GM12878 (cell line): ENCODE measurements at regions of chr13 and their contacts with region 1.

Region 1: GRCh38 chr13:22073718-22074117 is 402.8 kb downstream of the FGF9 start:
- DNase-seq: peak; percentile 33
- ATAC-seq: peak; percentile 91
- H3K4me3 ChIP-seq: no peak overlapping the region
- H3K27ac ChIP-seq: no peak overlapping the region
- H3K4me1 ChIP-seq: peaks cover 11% of the 10 kb centered on the region; the same call in 1 of the 2 replicates
- H3K27me3 ChIP-seq: no peaks in the 10 kb centered on the region
- CTCF ChIP-seq: no peak
- EP300 ChIP-seq: peak; percentile 70; a peak in 2 of 4 replicates
- POLR2A ChIP-seq: no peak
- RAD21 ChIP-seq: no peak

Region 2: DNA sequence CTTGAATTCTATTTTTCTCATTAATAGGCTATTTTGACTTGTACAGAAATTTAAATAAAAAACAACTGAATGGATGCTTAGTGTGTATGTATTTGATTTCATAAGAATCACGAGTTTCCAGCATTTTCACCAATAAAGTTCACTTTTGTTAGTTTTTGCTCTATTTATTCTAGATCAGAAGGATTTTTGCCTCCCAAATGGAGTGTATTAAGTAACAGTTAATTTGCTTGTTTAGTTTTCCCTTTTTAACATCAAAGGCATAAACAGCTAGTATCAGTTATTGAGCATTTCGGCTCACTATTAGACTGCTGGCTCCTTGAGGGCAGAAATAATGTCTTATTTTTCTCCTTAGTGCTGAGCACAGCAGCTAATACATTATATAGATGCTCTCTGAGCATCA is 11.3 kb after region 1 on chr13:
- CTCF ChIA-PET with region 1: interaction called, 4 read pairs
- POLR2A ChIA-PET with region 1: no interaction called
- RAD21 ChIA-PET with region 1: no interaction called
- SMC1A ChIA-PET with region 1: interaction called, 10 read pairs
- in situ Hi-C with region 1: no loop called
- intact Hi-C with region 1: no loop called
- DNase-seq: no peak
- ATAC-seq: no peak
- H3K4me3 ChIP-seq: no peak overlapping the region
- H3K27ac ChIP-seq: no peak overlapping the region
- H3K4me1 ChIP-seq: no peaks in the 10 kb centered on the region
- H3K27me3 ChIP-seq: no peaks in the 10 kb centered on the region
- CTCF ChIP-seq: no peak
- EP300 ChIP-seq: no peak
- POLR2A ChIP-seq: no peak
- RAD21 ChIP-seq: no peak

Region 3: GRCh38 chr13:22114630-22115311 is 41.1 kb after region 1 on chr13:
- CTCF ChIA-PET with region 1: interaction called, 5 read pairs
- POLR2A ChIA-PET with region 1: no interaction called
- RAD21 ChIA-PET with region 1: interaction called, 11 read pairs
- SMC1A ChIA-PET with region 1: interaction called, 9 read pairs
- in situ Hi-C with region 1: no loop called
- intact Hi-C with region 1: no loop called
- DNase-seq: peak; percentile 99
- ATAC-seq: peak; percentile 92
- H3K4me3 ChIP-seq: no peak overlapping the region
- H3K27ac ChIP-seq: peak overlapping the region; percentile 78
- H3K4me1 ChIP-seq: peaks cover 18% of the 10 kb centered on the region
- H3K27me3 ChIP-seq: no peaks in the 10 kb centered on the region
- CTCF ChIP-seq: no peak
- EP300 ChIP-seq: peak; percentile 99 to 100
- POLR2A ChIP-seq: peak; percentile 58; the same call in 1 of the 2 replicates
- RAD21 ChIP-seq: peak; percentile 17; the same call in 1 of the 2 replicates

Region 4: DNA sequence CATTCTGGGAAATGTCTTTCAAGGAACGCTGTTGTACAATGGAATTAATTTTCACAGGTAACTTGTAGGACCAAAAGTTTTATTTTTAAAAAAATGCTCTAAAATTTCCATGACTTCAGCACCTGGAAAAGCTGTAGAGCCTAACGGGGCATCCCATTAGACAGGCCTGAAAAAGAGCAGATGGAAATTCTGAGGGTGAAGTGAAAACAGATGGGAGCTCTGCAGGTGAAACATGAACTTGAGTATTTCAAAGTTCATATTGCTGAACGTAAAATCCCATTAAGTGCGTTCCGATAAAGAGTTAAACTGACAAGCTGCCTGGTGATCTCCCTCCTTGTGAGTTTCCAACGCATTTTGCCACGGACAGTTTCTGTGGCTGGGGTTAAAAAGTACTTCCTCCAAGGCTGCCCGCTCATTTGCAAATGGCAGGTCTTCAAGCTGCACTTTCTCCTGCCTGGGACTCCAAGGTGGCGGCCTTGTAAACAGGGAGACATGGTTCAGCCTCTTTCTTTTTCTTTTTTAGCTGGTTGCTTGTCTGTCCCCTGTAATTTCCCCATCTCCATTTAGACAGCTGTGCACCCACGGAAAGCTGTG is 47.5 kb after region 1 on chr13:
- CTCF ChIA-PET with region 1: interaction called, 4 read pairs
- POLR2A ChIA-PET with region 1: interaction called, 4 read pairs
- RAD21 ChIA-PET with region 1: interaction called, 5 read pairs
- SMC1A ChIA-PET with region 1: interaction called, 11 read pairs
- in situ Hi-C with region 1: no loop called
- intact Hi-C with region 1: no loop called
- DNase-seq: peak; percentile 49
- ATAC-seq: peak; percentile 79
- H3K4me3 ChIP-seq: no peak overlapping the region
- H3K27ac ChIP-seq: peak overlapping the region; percentile 33; the same call in 1 of the 2 replicates
- H3K4me1 ChIP-seq: peaks cover 24% of the 10 kb centered on the region
- H3K27me3 ChIP-seq: no peaks in the 10 kb centered on the region
- CTCF ChIP-seq: no peak
- EP300 ChIP-seq: peak in 1 of 2 experiments; percentile 42; a peak in 1 of 4 replicates
- POLR2A ChIP-seq: no peak
- RAD21 ChIP-seq: no peak

Region 5: GRCh38 chr13:22298530-22298929 is 224.8 kb after region 1 on chr13:
- CTCF ChIA-PET with region 1: no interaction called
- POLR2A ChIA-PET with region 1: no interaction called
- RAD21 ChIA-PET with region 1: no interaction called
- SMC1A ChIA-PET with region 1: no interaction called
- in situ Hi-C with region 1: no loop called
- intact Hi-C with region 1: no loop called
- DNase-seq: no peak
- ATAC-seq: no peak
- H3K4me3 ChIP-seq: no peak overlapping the region
- H3K27ac ChIP-seq: no peak overlapping the region
- H3K4me1 ChIP-seq: no peaks in the 10 kb centered on the region
- H3K27me3 ChIP-seq: no peaks in the 10 kb centered on the region
- CTCF ChIP-seq: no peak
- EP300 ChIP-seq: no peak
- POLR2A ChIP-seq: no peak
- RAD21 ChIP-seq: no peak

Region 6: DNA sequence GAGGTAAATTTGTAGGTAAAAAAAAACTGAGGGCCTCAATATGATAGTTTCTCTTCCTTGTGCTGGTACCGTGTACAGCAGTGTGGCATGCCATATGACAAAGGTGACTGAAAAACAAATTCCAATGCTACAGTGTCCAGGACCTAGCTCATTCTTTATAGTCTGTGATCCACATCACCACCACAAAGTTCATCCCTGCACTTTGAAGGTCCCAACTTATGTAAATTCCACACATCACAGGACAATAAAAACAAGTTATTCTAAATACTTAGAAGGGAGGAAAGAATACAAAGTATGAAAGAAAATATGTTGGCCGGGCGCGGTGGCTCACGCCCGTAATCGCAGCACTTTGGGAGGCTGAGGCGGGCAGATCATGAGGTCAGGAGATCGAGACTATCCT is 792.5 kb after region 1 on chr13:
- CTCF ChIA-PET with region 1: no interaction called
- POLR2A ChIA-PET with region 1: interaction called, 12 read pairs
- RAD21 ChIA-PET with region 1: no interaction called
- SMC1A ChIA-PET with region 1: no interaction called
- in situ Hi-C with region 1: no loop called
- intact Hi-C with region 1: no loop called
- DNase-seq: no peak
- ATAC-seq: peak; percentile 21; the same call in 1 of the 3 replicates
- H3K4me3 ChIP-seq: no peak overlapping the region
- H3K27ac ChIP-seq: no peak overlapping the region
- H3K4me1 ChIP-seq: no peaks in the 10 kb centered on the region
- H3K27me3 ChIP-seq: no peaks in the 10 kb centered on the region
- CTCF ChIP-seq: no peak
- EP300 ChIP-seq: no peak
- POLR2A ChIP-seq: no peak
- RAD21 ChIP-seq: no peak